Endothelial cell of umbilical vein (primary cell): ENCODE measurements at regions of chr1 and their contacts with region 1.

Region 1: DNA sequence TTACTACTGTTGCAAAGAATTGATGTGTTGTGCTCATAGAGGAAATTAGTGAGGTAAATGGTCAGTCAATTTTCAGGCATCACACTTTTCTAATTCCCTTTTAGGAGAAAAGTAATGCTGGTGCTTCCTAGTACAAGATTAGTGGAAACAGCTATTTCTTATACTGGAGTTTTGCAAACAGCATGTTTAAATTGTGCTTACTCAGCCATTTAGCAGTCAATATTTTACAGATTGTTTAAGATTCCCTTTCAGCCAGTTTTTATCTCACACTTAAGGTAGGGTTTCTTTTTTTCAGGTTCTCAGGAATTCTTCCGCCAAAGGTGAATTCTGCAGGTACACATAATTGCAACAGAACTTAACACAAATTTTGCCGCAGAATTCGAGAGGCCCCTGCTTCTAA is 10.9 kb downstream of the SRRM1 start:
- DNase-seq: no peak
- H3K4me3 ChIP-seq: no peak overlapping the region
- H3K27ac ChIP-seq: no peak overlapping the region
- H3K4me1 ChIP-seq: no peaks in the 10 kb centered on the region
- H3K27me3 ChIP-seq: no peaks in the 10 kb centered on the region
- CTCF ChIP-seq: no peak
- POLR2A ChIP-seq: no peak

Region 2: DNA sequence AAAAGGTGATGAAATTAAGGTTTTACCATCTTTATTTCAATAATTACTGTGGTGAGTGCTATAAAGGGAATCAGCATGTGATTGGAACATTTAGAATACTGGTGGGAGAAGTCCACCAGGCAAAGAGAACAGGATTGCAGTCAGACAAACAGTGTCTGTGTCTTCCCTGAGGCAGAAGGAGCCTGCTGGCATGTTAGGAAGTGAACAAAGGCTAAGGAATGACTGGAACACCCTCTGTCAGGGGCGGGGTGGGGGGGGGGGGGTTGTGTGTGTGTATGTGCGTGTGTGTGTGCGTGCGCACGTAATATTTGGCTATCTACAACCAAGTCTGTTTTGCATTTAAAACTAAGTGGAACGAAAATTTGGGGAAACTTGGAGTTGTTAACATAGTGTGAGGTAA is 19.3 kb after region 1 on chr1:
- CTCF ChIA-PET with region 1: interaction called, 6 read pairs
- POLR2A ChIA-PET with region 1: no interaction called
- dilution Hi-C with region 1: no loop called
- intact Hi-C with region 1: loop called (anchors 2 kb)
- DNase-seq: no peak
- H3K4me3 ChIP-seq: no peak overlapping the region
- H3K27ac ChIP-seq: no peak overlapping the region
- H3K4me1 ChIP-seq: no peaks in the 10 kb centered on the region
- H3K27me3 ChIP-seq: no peaks in the 10 kb centered on the region
- CTCF ChIP-seq: no peak
- POLR2A ChIP-seq: no peak

Region 3: DNA sequence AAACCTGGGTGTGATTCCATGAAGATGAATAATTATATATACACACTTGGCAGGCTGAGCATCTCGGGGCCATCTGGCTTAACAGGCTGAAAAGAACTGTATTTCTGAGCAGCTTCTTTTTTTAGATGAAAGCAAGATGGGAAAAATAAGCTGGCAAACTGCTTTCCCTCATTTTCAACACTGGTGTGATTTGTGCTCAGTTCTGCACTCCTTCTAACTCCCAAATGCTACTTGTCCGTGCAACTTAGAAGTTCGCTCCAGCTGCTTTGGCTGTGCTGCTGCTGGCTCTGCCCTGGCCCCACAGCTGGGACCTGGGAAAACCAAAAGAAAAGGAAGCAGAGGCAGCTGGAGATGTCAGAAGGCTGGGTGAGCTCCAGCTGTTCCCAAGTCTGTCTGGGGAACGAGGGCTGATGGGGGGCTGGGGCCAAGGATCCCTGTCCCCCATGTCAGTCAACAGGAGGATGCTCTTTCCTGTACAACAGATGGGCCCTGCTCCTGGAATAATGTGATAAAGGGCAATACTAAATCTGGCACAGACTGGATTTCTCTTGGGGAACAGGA is 1298.9 kb after region 1 on chr1:
- CTCF ChIA-PET with region 1: no interaction called
- POLR2A ChIA-PET with region 1: no interaction called
- dilution Hi-C with region 1: no loop called
- intact Hi-C with region 1: no loop called
- DNase-seq: no peak
- H3K4me3 ChIP-seq: no peak overlapping the region
- H3K27ac ChIP-seq: no peak overlapping the region
- H3K4me1 ChIP-seq: no peaks in the 10 kb centered on the region
- H3K27me3 ChIP-seq: no peaks in the 10 kb centered on the region
- CTCF ChIP-seq: no peak
- POLR2A ChIP-seq: no peak